Mammary epithelial cell (primary cell): ENCODE measurements at regions of chr12 and their contacts with region 1.

Region 1: DNA sequence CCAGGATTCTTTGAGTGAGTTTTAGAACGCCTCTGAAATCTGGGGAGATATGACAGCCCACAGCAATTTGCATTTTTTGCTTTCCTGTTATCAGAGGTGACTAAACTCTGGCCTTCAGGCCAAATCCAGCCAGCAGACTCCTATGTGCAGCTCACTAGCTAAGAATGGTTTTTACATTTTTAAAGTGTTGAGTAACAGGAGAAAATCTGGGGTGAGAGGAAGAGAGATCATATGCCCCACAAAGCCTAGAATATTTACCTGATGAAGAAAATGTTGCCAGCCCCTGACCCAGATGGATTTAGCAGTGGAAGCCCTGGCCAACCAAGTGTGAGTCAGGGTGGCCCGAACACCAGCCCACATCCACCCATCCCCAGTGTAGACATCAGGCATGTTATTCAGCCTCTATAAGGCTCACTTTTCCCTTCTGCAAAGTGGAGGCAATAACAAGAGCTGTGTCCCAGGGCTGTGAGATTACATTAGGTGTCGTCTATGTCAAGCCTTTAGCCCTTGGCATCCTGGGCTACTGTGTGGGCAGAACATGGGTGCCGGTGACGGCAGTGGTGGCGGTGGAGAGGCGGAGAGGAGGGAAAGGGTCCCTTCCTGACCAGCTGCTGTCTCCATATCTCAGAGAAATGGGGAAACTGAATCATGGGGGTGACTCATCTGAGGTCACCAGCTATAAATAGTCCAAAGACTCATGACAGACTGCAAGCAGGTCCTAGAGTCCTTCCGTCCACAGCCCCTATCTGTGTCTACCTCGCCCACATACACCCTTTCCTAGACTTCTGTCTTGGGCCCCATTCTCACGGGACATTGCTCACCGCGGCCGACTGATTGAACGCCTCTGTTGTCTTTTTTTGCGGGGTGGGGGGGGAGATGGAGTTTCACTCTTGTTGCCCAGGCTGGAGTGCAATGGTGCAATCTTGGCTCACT is 32.6 kb upstream of the CD9 start:
- DNase-seq: peak; percentile 90
- H3K4me3 ChIP-seq: no peak overlapping the region
- H3K27ac ChIP-seq: peak overlapping the region; percentile 47
- H3K4me1 ChIP-seq: peaks cover 17% of the 10 kb centered on the region
- H3K27me3 ChIP-seq: no peaks in the 10 kb centered on the region
- CTCF ChIP-seq: no peak

Region 2: DNA sequence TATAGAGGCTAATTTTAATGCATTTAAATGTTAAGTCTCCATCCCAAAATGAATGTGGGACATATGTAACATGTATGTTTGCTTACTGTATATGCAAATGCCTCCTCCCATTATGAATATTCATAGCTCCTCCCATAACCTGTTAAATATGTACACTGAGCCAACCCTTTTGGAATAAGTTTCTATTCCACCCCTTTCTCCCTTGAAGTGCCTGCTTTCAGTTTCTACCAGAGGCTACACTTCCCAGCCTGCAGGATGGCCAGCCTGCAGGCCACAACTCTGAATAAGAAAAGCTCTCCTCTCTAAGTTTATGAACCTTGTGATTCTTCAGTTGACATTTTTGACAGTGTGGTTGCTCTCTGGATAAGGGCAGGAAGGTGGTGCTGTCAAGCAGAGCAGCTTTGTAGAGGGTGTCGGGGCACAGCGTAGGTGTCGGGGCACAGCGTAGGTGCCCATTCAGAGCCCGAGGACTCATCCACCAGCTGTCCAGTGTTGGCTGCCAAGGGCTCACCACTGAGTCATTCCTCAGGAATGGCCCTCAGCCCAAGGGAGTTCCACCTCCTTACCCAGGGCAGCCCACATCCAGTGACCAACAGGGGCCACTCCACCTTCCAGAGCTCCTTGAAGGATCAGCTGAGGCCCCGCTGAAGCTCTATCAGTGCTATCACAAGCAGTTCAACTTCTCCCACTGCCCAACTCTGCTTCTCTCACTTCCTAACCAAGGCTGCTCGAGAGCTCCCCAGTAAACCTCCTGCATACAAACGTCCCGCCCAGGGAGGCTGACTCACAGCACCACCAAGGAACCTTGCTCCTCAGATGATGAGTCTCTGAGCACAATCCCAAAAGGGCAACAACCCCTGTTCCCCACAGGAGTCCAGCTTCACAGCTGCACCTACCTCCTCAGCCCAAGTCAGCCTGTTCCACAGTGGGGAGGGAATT is 74.5 kb before region 1 on chr12:
- CTCF ChIA-PET with region 1: no interaction called
- dilution Hi-C with region 1: no loop called
- in situ Hi-C with region 1: no loop called
- intact Hi-C with region 1: loop called (anchors 5 kb)
- DNase-seq: peak; percentile 95
- H3K4me3 ChIP-seq: no peak overlapping the region
- H3K27ac ChIP-seq: peak overlapping the region; percentile 65
- H3K4me1 ChIP-seq: peaks cover 52% of the 10 kb centered on the region
- H3K27me3 ChIP-seq: no peaks in the 10 kb centered on the region
- CTCF ChIP-seq: peak in 1 of 2 donors; percentile 17

Region 3: GRCh38 chr12:6182116-6182898 is 14.7 kb after region 1 on chr12:
- CTCF ChIA-PET with region 1: no interaction called
- dilution Hi-C with region 1: no loop called
- in situ Hi-C with region 1: no loop called
- intact Hi-C with region 1: loop called (anchors 2 kb)
- DNase-seq: peak; percentile 79
- H3K4me3 ChIP-seq: no peak overlapping the region
- H3K27ac ChIP-seq: no peak overlapping the region
- H3K4me1 ChIP-seq: peaks cover 27% of the 10 kb centered on the region
- H3K27me3 ChIP-seq: no peaks in the 10 kb centered on the region
- CTCF ChIP-seq: no peak